Calu3 (cell line): ENCODE measurements at regions of chrX and their contacts with region 1.

Region 1: DNA sequence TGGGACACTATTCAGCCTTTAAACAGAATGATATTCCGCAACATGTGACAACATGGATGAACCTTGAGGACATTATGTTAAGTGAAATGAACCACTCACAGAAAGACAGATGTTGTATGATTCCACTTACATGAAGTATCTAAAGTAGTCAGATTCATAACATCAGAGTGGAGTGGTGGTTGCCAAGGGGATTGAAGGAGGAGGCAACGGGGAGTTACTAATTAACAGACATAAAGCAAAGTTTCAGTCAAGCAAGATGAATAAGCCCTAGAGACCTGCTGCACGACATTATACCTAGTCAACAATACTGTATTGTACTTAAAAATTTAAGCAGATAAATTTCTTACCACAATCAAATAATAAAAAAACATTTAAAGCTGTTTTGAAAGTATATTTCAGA is 105.0 kb upstream of the NR0B1 start:
- DNase-seq: peak; percentile 12
- H3K4me3 Mint-ChIP-seq: no peak overlapping the region
- H3K27ac Mint-ChIP-seq: no peak overlapping the region
- H3K4me1 Mint-ChIP-seq: peaks cover 8% of the 10 kb centered on the region
- H3K27me3 Mint-ChIP-seq: no peaks in the 10 kb centered on the region
- CTCF ChIP-seq: no peak

Region 2: GRCh38 chrX:30364229-30364628 is 49.9 kb before region 1 on chrX:
- CTCF ChIA-PET with region 1: interaction called, 3 read pairs
- intact Hi-C with region 1: loop called (anchors 10 kb)
- DNase-seq: peak; percentile 3
- H3K4me3 Mint-ChIP-seq: no peak overlapping the region
- H3K27ac Mint-ChIP-seq: no peak overlapping the region
- H3K4me1 Mint-ChIP-seq: peaks cover 15% of the 10 kb centered on the region
- H3K27me3 Mint-ChIP-seq: no peaks in the 10 kb centered on the region
- CTCF ChIP-seq: no peak

Region 3: DNA sequence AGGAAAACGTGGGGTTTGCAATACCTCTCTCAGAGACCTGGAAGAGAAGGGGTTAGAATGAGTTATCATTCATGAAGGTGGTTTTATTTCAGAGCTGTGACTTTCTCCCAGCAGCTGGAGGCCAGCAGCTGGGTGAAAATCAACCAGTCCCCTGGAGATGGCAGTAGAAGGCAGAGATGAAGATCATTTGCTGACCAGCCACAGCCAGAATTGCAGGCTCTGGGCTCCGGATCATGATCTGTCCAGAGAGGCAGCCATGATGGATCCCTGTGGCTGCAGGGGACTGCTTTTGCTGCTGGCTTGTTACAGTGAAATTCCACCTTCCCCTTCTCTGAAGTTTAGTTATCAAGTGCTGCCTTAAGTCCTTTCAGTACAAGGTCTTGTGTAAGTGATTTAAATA is 521.8 kb after region 1 on chrX:
- CTCF ChIA-PET with region 1: no interaction called
- intact Hi-C with region 1: no loop called
- DNase-seq: peak; percentile 45
- H3K4me3 Mint-ChIP-seq: no peak overlapping the region
- H3K27ac Mint-ChIP-seq: no peak overlapping the region
- H3K4me1 Mint-ChIP-seq: peaks cover 16% of the 10 kb centered on the region
- H3K27me3 Mint-ChIP-seq: no peaks in the 10 kb centered on the region
- CTCF ChIP-seq: no peak